ENCODE measurements at regions of chr19 and their contacts with region 1.

Region 1: DNA sequence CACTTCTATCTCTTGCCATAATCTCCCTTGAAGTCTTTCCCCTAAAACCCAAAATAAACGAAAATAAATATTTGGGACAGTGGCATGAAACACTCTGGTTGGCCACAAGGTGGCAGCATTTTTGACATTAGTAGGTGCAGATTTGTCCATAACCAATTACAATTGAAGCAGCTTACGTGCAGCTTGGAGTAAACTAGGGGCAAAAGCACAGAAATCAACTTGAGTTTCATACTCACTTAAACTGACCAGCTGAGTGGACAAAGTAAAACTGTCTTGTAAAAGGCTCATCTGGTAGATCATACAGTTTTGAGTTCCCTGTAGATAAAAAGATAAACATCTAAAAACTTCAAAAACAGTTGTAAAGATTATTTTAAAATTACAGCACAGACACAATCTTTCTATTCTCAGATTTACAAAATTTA is 18.8 kb downstream of the PDCD5 start:
- DNase-seq: peak; percentile 73
- H3K4me3 ChIP-seq: no peak overlapping the region; a peak in 1 of 4 replicates
- H3K27ac ChIP-seq: no peak overlapping the region
- H3K4me1 ChIP-seq: no peaks in the 10 kb centered on the region
- H3K27me3 ChIP-seq: no peaks in the 10 kb centered on the region
- CTCF ChIP-seq: peak; percentile 94
- EP300 ChIP-seq: no peak
- RAD21 ChIP-seq: peak; percentile 69

Region 2: GRCh38 chr19:32611161-32611560 is 11.4 kb after region 1 on chr19:
- CTCF ChIA-PET with region 1: interaction called, 10 read pairs
- POLR2A ChIA-PET with region 1: interaction called, 3 read pairs
- DNase-seq: peak; percentile 65
- H3K4me3 ChIP-seq: no peak overlapping the region
- H3K27ac ChIP-seq: peak overlapping the region in 1 of 2 experiments; percentile 32; a peak in 2 of 4 replicates
- H3K4me1 ChIP-seq: peaks cover 0 to 3% of the 10 kb centered on the region in 2 experiments; a peak in 1 of 4 replicates
- H3K27me3 ChIP-seq: no peaks in the 10 kb centered on the region
- CTCF ChIP-seq: no peak
- EP300 ChIP-seq: peak in 1 of 2 experiments; percentile 28; a peak in 1 of 4 replicates
- RAD21 ChIP-seq: no peak

Measured in SK-N-SH (cell line).